AG04450 (cell line): ENCODE measurements at regions of chr4 and their contacts with region 1.

Region 1: DNA sequence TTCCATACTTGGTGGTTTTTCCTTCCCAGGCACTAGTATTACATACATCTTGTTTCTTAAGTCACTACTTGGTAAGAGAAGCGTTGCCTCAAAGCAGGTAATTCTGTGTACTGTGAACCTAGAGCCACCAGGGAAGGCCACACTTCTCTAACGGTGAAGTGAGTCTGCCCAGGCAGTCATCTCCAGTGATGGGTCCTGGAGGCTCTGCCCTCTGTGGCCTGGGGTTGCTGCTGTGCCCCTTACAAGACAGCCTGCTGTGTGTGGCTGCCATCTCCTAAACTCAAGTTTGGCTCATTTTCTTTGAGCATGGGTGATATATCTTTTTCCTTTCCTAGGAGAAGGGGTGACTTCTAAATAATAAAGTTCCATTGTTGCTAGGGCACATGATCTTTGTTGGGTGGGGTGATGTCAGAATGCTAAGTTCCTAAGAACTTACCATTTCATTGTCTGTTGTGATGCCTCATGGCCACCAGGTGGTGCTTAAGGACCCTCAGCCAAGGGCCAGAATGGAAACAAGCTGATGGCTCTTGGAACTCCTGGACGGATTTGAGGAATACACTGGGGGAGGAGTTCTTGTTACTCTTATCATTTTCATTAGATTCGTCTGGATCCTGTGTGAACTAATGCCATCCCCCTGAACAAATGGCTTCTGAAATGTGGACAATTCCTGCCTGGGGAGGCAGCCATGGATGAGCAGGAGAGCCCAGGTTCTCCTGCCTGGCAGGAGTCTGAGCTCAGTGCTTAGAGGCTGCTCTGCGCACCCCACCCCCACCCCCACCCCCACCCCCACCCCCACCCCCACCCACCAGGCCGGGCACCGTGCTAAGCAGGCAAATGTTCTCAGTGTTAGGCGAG is 41.1 kb upstream of the WDR1 start:
- DNase-seq: peak; percentile 66
- H3K4me3 ChIP-seq: peak overlapping the region; percentile 38
- H3K27ac ChIP-seq: peak overlapping the region; percentile 4
- H3K27me3 ChIP-seq: peaks cover 4% of the 10 kb centered on the region
- CTCF ChIP-seq: peak; percentile 93

Region 2: GRCh38 chr4:10116580-10117358 is 40.9 kb before region 1 on chr4 and contains the start of gene WDR1:
- CTCF ChIA-PET with region 1: interaction called, 5 read pairs
- POLR2A ChIA-PET with region 1: interaction called, 27 read pairs
- DNase-seq: peak; percentile 90
- H3K4me3 ChIP-seq: peak within 1 kb of the TSS; percentile 87
- H3K27ac ChIP-seq: peak within 1 kb of the TSS; percentile 91
- H3K27me3 ChIP-seq: peaks cover 2% of the 10 kb centered on the region
- CTCF ChIP-seq: no peak
- polyA plus RNA-seq, gene WDR1: 722 and 735 TPM in 2 replicates

Region 3: GRCh38 chr4:10212400-10212799 is 54.7 kb after region 1 on chr4:
- CTCF ChIA-PET with region 1: no interaction called
- POLR2A ChIA-PET with region 1: no interaction called
- DNase-seq: no peak
- H3K4me3 ChIP-seq: no peak overlapping the region
- H3K27ac ChIP-seq: no peak overlapping the region
- H3K27me3 ChIP-seq: no peaks in the 10 kb centered on the region
- CTCF ChIP-seq: no peak

Region 4: GRCh38 chr4:10403633-10404445 is 246.1 kb after region 1 on chr4:
- CTCF ChIA-PET with region 1: interaction called, 63 read pairs
- POLR2A ChIA-PET with region 1: no interaction called
- DNase-seq: no peak
- H3K4me3 ChIP-seq: no peak overlapping the region
- H3K27ac ChIP-seq: no peak overlapping the region
- H3K27me3 ChIP-seq: peaks cover 2% of the 10 kb centered on the region
- CTCF ChIP-seq: peak; percentile 41

Region 5: DNA sequence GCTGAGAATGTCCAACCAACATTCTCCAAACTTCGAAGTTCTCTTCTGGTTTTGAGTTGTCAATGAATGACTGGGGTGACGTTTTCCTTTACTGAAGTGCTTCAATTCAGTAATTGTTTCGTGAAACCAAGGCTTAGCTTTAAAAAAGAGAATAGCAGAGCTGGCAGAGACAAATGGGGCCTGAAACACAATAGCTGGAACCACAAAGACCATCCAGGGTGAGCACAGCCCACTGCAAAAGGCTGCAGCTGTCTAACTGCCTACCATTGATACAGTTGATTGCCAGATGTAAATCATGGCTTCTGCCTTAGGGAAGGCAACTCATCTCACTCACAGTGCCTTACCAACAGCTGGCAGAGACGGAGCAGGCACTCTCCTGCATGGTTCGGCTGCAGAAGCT is 378.2 kb after region 1 on chr4:
- CTCF ChIA-PET with region 1: interaction called, 13 read pairs
- POLR2A ChIA-PET with region 1: no interaction called
- DNase-seq: no peak
- H3K4me3 ChIP-seq: no peak overlapping the region
- H3K27ac ChIP-seq: no peak overlapping the region
- H3K27me3 ChIP-seq: no peaks in the 10 kb centered on the region
- CTCF ChIP-seq: no peak

Region 6: GRCh38 chr4:10554694-10555093 is 397.0 kb after region 1 on chr4:
- CTCF ChIA-PET with region 1: interaction called, 13 read pairs
- POLR2A ChIA-PET with region 1: no interaction called
- DNase-seq: no peak
- H3K4me3 ChIP-seq: no peak overlapping the region
- H3K27ac ChIP-seq: no peak overlapping the region
- H3K27me3 ChIP-seq: peaks cover 3% of the 10 kb centered on the region
- CTCF ChIP-seq: peak; percentile 87